Transverse colon (tissue), 4 donors: ENCODE measurements at regions of chr18 and their contacts with region 1.

Region 1: DNA sequence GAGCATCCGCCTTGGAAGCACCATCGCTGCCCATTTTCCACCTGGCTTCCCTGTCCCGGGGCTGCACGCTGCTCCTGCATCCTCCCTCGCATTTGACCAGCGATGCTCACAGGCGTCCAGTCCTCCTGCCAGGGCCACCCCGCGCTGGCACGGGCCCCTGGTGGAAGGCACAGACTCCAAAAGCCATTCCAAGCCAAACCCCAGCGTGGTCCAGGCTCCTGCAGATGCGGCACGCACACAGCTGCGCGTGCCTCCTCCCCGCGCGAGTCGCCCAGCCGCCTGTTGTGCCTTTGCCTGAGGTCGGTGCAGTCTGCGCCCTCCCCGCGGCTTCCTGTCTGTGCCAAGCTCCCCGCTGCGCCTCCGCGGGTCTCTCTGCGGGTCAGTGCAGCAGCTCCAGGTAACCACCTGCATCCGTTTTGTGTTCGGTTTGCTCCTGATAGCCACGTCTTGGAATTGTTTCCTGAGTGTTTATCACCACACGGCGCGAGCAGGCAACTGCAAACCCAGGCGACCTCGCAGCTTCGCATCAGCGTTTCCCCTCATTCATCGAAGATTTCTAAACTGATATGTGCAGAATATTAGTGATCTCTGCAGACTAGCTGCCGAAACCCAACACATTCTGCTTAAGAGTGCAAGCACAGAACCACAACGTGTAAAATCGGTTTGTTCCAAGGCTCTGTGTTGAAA is 65.2 kb upstream of the SALL3 start:
- DNase-seq: no peak
- H3K4me3 ChIP-seq: no peak overlapping the region
- H3K27ac ChIP-seq: no peak overlapping the region
- H3K4me1 ChIP-seq: no peaks in the 10 kb centered on the region
- H3K27me3 ChIP-seq: no peaks in the 10 kb centered on the region
- CTCF ChIP-seq: no peak
- EP300 ChIP-seq: no peak
- POLR2A ChIP-seq: no peak

Region 2: GRCh38 chr18:78999937-79000336 is 85.5 kb after region 1 on chr18:
- in situ Hi-C with region 1: loop called in 1 of 4 experiments (anchors 25 kb)
- intact Hi-C with region 1: no loop called
- DNase-seq: no peak
- H3K4me3 ChIP-seq: no peak overlapping the region
- H3K27ac ChIP-seq: no peak overlapping the region
- H3K4me1 ChIP-seq: no peaks in the 10 kb centered on the region
- H3K27me3 ChIP-seq: peaks cover 7% of the 10 kb centered on the region
- CTCF ChIP-seq: no peak
- EP300 ChIP-seq: no peak
- POLR2A ChIP-seq: no peak